CD4-positive, alpha-beta T cell (primary cell): ENCODE measurements at regions of chr17 and their contacts with region 1.

Region 1: GRCh38 chr17:77444984-77445759 is 304.4 kb downstream of the SEC14L1 start:
- DNase-seq: peak; percentile 72 to 97 (median 83)
- ATAC-seq: peak; percentile 68
- H3K4me3 ChIP-seq: peak overlapping the region; percentile 55
- H3K4me3 Mint-ChIP-seq: peak overlapping the region; percentile 89
- H3K27ac ChIP-seq: peak overlapping the region; percentile 73 to 98
- H3K27ac Mint-ChIP-seq: peak overlapping the region; percentile 93
- H3K4me1 ChIP-seq: peaks cover 100% of the 10 kb centered on the region
- H3K4me1 Mint-ChIP-seq: peaks cover 98% of the 10 kb centered on the region
- H3K27me3 ChIP-seq: no peaks in the 10 kb centered on the region
- H3K27me3 Mint-ChIP-seq: no peaks in the 10 kb centered on the region
- CTCF ChIP-seq: no peak

Region 2: GRCh38 chr17:77372444-77373298 is 72.5 kb before region 1 on chr17:
- CTCF ChIA-PET with region 1: interaction called, 7 read pairs
- POLR2A ChIA-PET with region 1: interaction called, 48 read pairs
- intact Hi-C with region 1: no loop called
- DNase-seq: peak in 13 of 14 experiments; percentile 30 to 78 (median 58)
- ATAC-seq: peak; percentile 25
- H3K4me3 ChIP-seq: peak overlapping the region; percentile 100
- H3K4me3 Mint-ChIP-seq: peak overlapping the region; percentile 93
- H3K27ac ChIP-seq: peak overlapping the region; percentile 45 to 60
- H3K27ac Mint-ChIP-seq: peak overlapping the region; percentile 91
- H3K4me1 ChIP-seq: peaks cover 73% of the 10 kb centered on the region
- H3K4me1 Mint-ChIP-seq: peaks cover 75% of the 10 kb centered on the region
- H3K27me3 ChIP-seq: no peaks in the 10 kb centered on the region
- H3K27me3 Mint-ChIP-seq: no peaks in the 10 kb centered on the region
- CTCF ChIP-seq: no peak

Region 3: DNA sequence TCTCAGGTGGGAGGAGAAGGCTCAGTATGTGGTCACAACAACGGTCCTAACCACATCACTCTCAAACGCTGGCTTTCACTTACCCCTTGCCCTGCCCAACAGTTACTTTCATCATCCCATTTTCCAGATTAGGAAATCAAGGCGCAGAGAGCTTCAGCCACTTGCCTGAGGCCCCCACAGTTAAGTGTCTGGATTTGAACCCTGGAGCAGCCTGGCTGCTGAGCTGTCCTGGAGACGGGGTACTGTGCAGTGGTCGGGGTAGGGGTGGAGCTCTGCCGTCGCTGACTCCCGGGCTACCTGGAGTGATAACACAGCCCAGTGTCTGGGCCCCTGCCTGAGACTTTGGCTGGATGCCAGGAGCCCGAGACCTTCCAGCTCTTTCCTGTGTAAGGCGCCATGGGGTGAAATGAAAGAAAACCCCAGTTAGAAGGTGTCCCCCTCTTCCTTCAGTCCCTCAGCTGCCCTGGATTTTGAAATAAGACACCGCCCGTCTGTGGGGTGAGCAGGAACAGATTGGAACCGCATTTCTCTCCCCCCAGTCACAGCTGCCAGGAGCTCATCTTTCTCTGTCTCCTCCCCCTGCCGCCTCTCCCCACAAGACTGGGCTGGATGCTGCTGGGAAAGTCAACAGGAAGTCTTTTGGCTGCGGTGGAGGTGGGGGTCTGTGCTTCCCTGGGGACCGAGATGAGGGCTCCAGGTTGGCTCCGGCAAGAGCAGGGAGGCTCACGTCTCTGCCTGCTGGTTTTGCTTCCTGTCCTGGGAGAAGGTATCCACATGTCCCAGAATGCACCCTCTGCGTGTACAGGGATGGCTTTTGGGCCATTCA is 24.2 kb before region 1 on chr17:
- CTCF ChIA-PET with region 1: interaction called, 6 read pairs
- POLR2A ChIA-PET with region 1: interaction called, 133 read pairs
- intact Hi-C with region 1: no loop called
- DNase-seq: peak; percentile 44 to 82 (median 66)
- ATAC-seq: peak; percentile 69
- H3K4me3 ChIP-seq: peak overlapping the region; percentile 31
- H3K4me3 Mint-ChIP-seq: peak overlapping the region; percentile 83
- H3K27ac ChIP-seq: peak overlapping the region; percentile 61 to 76
- H3K27ac Mint-ChIP-seq: peak overlapping the region; percentile 89
- H3K4me1 ChIP-seq: peaks cover 92% of the 10 kb centered on the region
- H3K4me1 Mint-ChIP-seq: peaks cover 65% of the 10 kb centered on the region
- H3K27me3 ChIP-seq: no peaks in the 10 kb centered on the region
- H3K27me3 Mint-ChIP-seq: no peaks in the 10 kb centered on the region
- CTCF ChIP-seq: no peak

Region 4: DNA sequence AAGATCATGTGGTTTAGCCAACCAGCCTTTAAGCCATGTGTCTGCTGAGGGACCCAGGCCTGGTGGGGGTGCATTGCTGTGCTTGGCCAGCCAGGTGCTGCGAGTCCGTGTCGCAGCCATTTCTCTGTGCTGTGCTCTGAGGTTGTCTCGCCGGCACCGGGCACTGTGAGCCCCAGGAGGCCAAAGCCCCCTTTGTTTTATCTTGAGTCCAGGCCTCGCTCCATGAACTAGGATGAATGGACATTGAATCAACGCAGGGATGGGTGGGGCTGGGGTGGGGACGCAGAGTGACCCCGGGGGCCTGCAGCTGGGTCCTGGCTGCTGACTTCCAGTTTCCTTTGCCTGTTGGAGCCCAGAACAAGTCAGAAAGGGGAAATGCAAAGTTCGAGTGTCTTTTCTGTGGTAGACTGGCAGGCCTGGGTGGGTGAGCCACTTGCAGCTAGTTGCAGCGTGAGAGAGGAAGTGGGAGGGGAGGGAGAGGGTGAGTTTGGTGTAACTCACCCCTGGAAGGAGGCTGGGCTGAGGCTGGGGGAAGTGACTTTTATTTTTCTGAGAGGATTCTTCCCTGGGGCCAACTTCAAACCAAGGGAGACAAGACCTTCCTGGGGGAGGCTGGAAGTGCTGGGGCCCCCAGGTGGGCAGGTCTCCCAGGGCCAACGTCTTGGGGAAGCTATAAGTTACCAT is 20.3 kb after region 1 on chr17:
- CTCF ChIA-PET with region 1: interaction called, 7 read pairs
- POLR2A ChIA-PET with region 1: interaction called, 681 read pairs
- intact Hi-C with region 1: no loop called
- DNase-seq: peak; percentile 63 to 91 (median 78)
- ATAC-seq: peak; percentile 93
- H3K4me3 ChIP-seq: peak overlapping the region; percentile 39
- H3K4me3 Mint-ChIP-seq: peak overlapping the region; percentile 85
- H3K27ac ChIP-seq: peak overlapping the region; percentile 58 to 74
- H3K27ac Mint-ChIP-seq: peak overlapping the region; percentile 96
- H3K4me1 ChIP-seq: peaks cover 100% of the 10 kb centered on the region
- H3K4me1 Mint-ChIP-seq: peaks cover 84% of the 10 kb centered on the region
- H3K27me3 ChIP-seq: no peaks in the 10 kb centered on the region
- H3K27me3 Mint-ChIP-seq: no peaks in the 10 kb centered on the region
- CTCF ChIP-seq: no peak

Region 5: GRCh38 chr17:77494664-77495435 is 49.7 kb after region 1 on chr17:
- CTCF ChIA-PET with region 1: interaction called, 4 read pairs
- POLR2A ChIA-PET with region 1: interaction called, 18 read pairs
- intact Hi-C with region 1: no loop called
- DNase-seq: peak; percentile 55 to 89 (median 71)
- ATAC-seq: peak; percentile 79
- H3K4me3 ChIP-seq: no peak overlapping the region
- H3K4me3 Mint-ChIP-seq: no peak overlapping the region
- H3K27ac ChIP-seq: peak overlapping the region; percentile 3 to 40
- H3K27ac Mint-ChIP-seq: peak overlapping the region; percentile 71
- H3K4me1 ChIP-seq: peaks cover 57% of the 10 kb centered on the region
- H3K4me1 Mint-ChIP-seq: peaks cover 7% of the 10 kb centered on the region
- H3K27me3 ChIP-seq: no peaks in the 10 kb centered on the region
- H3K27me3 Mint-ChIP-seq: no peaks in the 10 kb centered on the region
- CTCF ChIP-seq: peak; percentile 99